Body of pancreas (tissue), 4 donors: ENCODE measurements at regions of chr2 and their contacts with region 1.

Region 1: GRCh38 chr2:18749912-18750526 is 160.7 kb upstream of the NT5C1B start:
- DNase-seq: peak; percentile 58 to 67 (median 64)
- ATAC-seq: no peak
- H3K4me3 ChIP-seq: no peak overlapping the region
- H3K27ac ChIP-seq: no peak overlapping the region
- H3K4me1 ChIP-seq: no peaks in the 10 kb centered on the region
- H3K27me3 ChIP-seq: no peaks in the 10 kb centered on the region
- CTCF ChIP-seq: peak; percentile 43 to 91 (median 82)
- POLR2A ChIP-seq: no peak

Region 2: DNA sequence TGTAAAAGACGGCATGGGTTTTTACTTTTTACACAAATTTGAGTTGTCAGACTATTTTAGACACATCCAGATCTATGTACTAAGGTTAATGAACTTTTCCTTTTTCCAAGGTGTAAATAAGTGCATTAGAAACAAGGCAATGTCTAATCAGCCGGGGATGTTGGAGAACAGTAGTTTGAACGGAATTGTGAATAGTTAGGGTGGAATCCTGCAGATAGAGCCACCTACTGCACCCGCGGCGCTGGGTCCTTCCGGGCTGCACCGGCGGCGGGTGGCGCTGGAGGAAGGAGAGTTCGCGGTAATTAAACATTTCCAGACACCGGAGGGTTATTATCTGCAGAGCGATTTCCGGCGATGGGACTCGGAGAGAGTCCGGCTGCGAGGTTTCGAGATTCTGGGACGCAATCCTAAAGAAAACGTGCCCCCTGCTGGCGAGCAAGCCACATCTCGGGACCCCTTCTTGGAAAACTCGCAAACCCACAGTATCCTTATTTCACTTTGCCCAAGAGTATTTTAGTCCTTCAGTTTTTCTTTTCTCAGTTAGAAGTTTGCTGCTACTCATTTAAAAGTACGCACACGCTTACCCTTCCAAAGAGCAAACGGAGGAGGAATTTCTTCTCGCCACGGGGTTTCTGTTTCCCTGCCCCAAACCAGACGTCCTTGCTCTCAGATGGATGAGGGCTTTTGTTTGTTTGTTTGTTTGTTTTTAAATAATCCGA is 612.9 kb after region 1 on chr2:
- intact Hi-C with region 1: loop called (anchors 5 kb)
- DNase-seq: peak; percentile 79 to 82 (median 80)
- ATAC-seq: peak; percentile 77
- H3K4me3 ChIP-seq: peak overlapping the region; percentile 1 to 8
- H3K27ac ChIP-seq: no peak overlapping the region
- H3K4me1 ChIP-seq: peaks cover 23% of the 10 kb centered on the region
- H3K27me3 ChIP-seq: peaks cover 0 to 11% of the 10 kb centered on the region in 2 donors
- CTCF ChIP-seq: peak; percentile 44 to 83 (median 79)
- POLR2A ChIP-seq: no peak